OCI-LY7 (cell line): ENCODE measurements at regions of chr14 and their contacts with region 1.

Region 1: GRCh38 chr14:75009176-75009575 is 6.5 kb downstream of the EIF2B2 start:
- DNase-seq: no peak
- H3K4me3 ChIP-seq: no peak overlapping the region
- H3K27ac ChIP-seq: no peak overlapping the region
- H3K4me1 ChIP-seq: peaks cover 2% of the 10 kb centered on the region
- CTCF ChIP-seq: no peak

Region 2: GRCh38 chr14:75049731-75050201 is 40.6 kb after region 1 on chr14:
- CTCF ChIA-PET with region 1: no interaction called
- POLR2A ChIA-PET with region 1: no interaction called
- intact Hi-C with region 1: loop called (anchors 5 kb)
- DNase-seq: no peak
- H3K4me3 ChIP-seq: no peak overlapping the region
- H3K27ac ChIP-seq: no peak overlapping the region
- H3K4me1 ChIP-seq: peaks cover 9% of the 10 kb centered on the region
- CTCF ChIP-seq: no peak

Region 3: DNA sequence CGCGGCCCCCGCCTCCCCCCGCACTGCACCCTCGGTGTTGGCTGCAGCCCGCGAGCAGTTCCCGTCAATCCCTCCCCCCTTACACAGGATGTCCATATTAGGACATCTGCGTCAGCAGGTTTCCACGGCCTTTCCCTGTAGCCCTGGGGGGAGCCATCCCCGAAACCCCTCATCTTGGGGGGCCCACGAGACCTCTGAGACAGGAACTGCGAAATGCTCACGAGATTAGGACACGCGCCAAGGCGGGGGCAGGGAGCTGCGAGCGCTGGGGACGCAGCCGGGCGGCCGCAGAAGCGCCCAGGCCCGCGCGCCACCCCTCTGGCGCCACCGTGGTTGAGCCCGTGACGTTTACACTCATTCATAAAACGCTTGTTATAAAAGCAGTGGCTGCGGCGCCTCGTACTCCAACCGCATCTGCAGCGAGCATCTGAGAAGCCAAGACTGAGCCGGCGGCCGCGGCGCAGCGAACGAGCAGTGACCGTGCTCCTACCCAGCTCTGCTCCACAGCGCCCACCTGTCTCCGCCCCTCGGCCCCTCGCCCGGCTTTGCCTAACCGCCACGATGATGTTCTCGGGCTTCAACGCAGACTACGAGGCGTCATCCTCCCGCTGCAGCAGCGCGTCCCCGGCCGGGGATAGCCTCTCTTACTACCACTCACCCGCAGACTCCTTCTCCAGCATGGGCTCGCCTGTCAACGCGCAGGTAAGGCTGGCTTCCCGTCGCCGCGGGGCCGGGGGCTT is 269.4 kb after region 1 on chr14 and contains the start of gene FOS:
- CTCF ChIA-PET with region 1: no interaction called
- POLR2A ChIA-PET with region 1: no interaction called
- intact Hi-C with region 1: no loop called
- DNase-seq: peak; percentile 92
- H3K4me3 ChIP-seq: peak within 1 kb of the TSS; percentile 68
- H3K27ac ChIP-seq: peak within 1 kb of the TSS; percentile 17
- H3K4me1 ChIP-seq: peaks cover 32% of the 10 kb centered on the region
- CTCF ChIP-seq: no peak
- total RNA-seq, gene FOS: 12.4 and 16.9 TPM in 2 replicates